Heart left ventricle (tissue), 16 donors: ENCODE measurements at regions of chr17 and their contacts with region 1.

Region 1: DNA sequence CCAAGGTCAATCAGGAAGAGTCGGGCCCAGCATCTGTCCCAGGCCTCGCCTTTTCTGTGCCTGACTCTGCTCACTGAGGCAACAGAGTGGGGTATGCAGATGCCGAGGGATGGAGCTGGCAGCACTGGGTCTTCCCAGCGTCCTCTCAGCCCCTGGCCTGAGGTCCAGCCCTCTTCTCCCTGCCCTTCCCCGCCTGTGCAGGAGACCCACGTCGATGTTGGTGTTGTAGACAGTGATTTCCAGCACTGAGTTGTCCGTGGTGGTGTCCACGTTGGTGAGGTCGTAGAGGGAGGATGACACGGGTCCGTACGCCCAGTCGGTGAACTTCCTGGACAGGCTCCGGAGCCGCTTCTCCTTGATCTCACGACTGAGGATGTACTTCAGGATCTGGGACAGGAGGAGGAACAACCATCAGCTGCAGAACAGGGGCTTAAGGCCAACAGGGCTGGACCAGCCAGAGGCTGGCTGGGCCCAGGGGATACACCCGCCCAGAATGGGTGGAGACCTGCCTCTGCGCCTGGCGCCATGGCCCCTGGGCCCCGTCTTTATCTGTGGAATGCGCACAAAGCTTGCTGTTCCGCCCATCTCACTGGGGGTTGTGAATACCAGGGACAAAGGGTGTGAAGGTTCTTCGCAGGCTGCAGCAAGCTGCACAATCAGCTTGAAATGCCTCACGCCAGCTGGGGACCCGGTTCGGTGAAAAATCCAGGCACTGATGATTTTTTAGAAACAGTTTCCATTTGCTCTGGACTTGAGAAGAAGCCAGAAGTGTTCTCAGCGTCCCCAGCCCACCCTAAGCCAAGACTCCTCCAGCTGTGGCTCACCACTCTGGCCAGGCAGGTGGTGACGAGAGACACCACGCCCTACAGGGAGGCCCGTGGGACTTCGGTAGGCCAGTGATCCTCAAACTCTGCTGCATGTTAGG is 27.5 kb downstream of the TRPV3 start:
- DNase-seq: peak; percentile 32 to 90 (median 86)
- ATAC-seq: peak; percentile 85 to 90 (median 88)
- H3K4me3 ChIP-seq: peak overlapping the region in 3 of 12 donors; percentile 4 to 25 (median 9)
- H3K27ac ChIP-seq: peak overlapping the region in 11 of 12 donors; percentile 24 to 79 (median 58)
- H3K4me1 ChIP-seq: peaks cover 0 to 36% (median 10%) of the 10 kb centered on the region in 12 donors
- H3K27me3 ChIP-seq: no peaks in the 10 kb centered on the region
- CTCF ChIP-seq: no peak
- POLR2A ChIP-seq: no peak

Region 2: GRCh38 chr17:3256575-3256974 is 273.5 kb before region 1 on chr17:
- intact Hi-C with region 1: no loop called
- DNase-seq: no peak
- ATAC-seq: no peak
- H3K4me3 ChIP-seq: no peak overlapping the region
- H3K27ac ChIP-seq: no peak overlapping the region
- H3K4me1 ChIP-seq: no peaks in the 10 kb centered on the region
- H3K27me3 ChIP-seq: peaks cover 0 to 7% (median 0%) of the 10 kb centered on the region in 9 donors
- CTCF ChIP-seq: no peak
- POLR2A ChIP-seq: no peak

Region 3: DNA sequence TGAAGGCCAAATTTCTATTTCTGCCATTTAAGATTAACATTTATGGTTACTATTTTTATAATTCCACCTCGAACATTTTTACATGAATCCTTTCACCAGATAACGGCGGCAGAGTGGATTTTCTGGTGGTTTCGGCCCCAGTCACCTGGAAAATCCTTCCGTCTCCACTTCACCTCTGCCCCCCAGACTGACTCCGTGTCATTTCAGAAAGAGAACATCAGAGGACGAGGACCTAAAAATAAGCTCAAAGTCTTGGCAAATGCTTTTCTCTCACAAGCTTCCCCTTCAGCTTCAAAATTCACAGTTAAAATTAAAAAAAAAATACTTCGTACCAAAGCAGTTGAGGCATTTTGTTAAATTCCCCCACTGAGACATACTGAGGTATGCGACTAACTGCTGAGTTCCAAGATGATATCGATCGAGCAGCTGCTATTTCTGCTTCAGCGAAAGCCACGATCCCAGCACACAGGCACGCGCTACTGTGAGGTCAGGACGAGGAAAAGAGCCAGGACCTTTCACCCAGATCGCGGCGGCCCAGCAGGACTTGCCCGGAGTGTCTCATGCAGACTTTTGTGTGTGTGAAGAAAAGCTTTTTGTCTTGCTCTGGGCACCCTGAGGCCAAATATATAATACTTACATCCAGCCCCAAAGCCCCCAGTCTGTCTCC is 17.4 kb before region 1 on chr17:
- intact Hi-C with region 1: loop called in 2 of 10 experiments (anchors 2 kb)
- DNase-seq: peak; percentile 77 to 93 (median 87)
- ATAC-seq: peak; percentile 93 to 98 (median 96)
- H3K4me3 ChIP-seq: peak overlapping the region in 9 of 12 donors; percentile 5 to 31 (median 17)
- H3K27ac ChIP-seq: peak overlapping the region; percentile 84 to 97 (median 91)
- H3K4me1 ChIP-seq: peaks cover 0 to 31% (median 22%) of the 10 kb centered on the region in 12 donors
- H3K27me3 ChIP-seq: no peaks in the 10 kb centered on the region
- CTCF ChIP-seq: no peak
- POLR2A ChIP-seq: no peak

Region 4: GRCh38 chr17:3575511-3575910 is 45.4 kb after region 1 on chr17:
- intact Hi-C with region 1: no loop called
- DNase-seq: no peak
- ATAC-seq: no peak
- H3K4me3 ChIP-seq: no peak overlapping the region
- H3K27ac ChIP-seq: no peak overlapping the region
- H3K4me1 ChIP-seq: no peaks in the 10 kb centered on the region
- H3K27me3 ChIP-seq: no peaks in the 10 kb centered on the region
- CTCF ChIP-seq: no peak
- POLR2A ChIP-seq: no peak

Region 5: GRCh38 chr17:3585826-3586225 is 55.7 kb after region 1 on chr17:
- intact Hi-C with region 1: loop called in 1 of 10 experiments (anchors 2 kb)
- DNase-seq: no peak
- ATAC-seq: peak in 2 of 4 donors; percentile 12 to 21
- H3K4me3 ChIP-seq: no peak overlapping the region
- H3K27ac ChIP-seq: no peak overlapping the region
- H3K4me1 ChIP-seq: no peaks in the 10 kb centered on the region
- H3K27me3 ChIP-seq: no peaks in the 10 kb centered on the region
- CTCF ChIP-seq: no peak
- POLR2A ChIP-seq: no peak